Activated CD4-positive, alpha-beta memory T cell treated with anti-CD3 and anti-CD28 coated beads for 36 hours (primary cell): ENCODE measurements at regions of chr11 and their contacts with region 1.

Region 1: DNA sequence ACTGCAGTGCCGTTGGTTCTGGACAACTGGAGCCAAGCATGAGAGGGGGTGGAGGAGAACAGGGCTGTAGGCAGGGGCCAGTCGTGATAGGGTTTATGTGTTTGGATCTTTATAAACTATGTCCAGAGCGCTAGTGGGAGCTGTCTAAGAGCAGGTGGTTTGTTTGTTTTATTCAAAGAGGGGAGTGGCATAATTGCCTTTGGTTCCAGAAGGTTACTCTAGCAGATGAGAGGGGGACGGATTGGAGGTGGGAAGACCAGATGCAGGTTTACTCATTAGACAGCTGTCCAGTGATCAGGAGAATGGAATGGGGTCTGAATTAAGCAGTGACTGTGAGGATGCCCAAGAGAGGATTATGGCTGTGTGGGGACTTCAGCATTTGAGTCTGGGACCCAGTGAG is 109.3 kb upstream of the TBCEL start:
- DNase-seq: no peak
- H3K4me3 Mint-ChIP-seq: no peak overlapping the region
- H3K27ac Mint-ChIP-seq: no peak overlapping the region
- H3K4me1 Mint-ChIP-seq: no peaks in the 10 kb centered on the region
- H3K27me3 Mint-ChIP-seq: peaks cover 7% of the 10 kb centered on the region

Region 2: GRCh38 chr11:120778685-120779490 is 135.7 kb before region 1 on chr11:
- CTCF ChIA-PET with region 1: no interaction called
- POLR2A ChIA-PET with region 1: no interaction called
- intact Hi-C with region 1: no loop called
- DNase-seq: no peak
- H3K4me3 Mint-ChIP-seq: no peak overlapping the region
- H3K27ac Mint-ChIP-seq: no peak overlapping the region
- H3K4me1 Mint-ChIP-seq: no peaks in the 10 kb centered on the region
- H3K27me3 Mint-ChIP-seq: peaks cover 5% of the 10 kb centered on the region

Region 3: DNA sequence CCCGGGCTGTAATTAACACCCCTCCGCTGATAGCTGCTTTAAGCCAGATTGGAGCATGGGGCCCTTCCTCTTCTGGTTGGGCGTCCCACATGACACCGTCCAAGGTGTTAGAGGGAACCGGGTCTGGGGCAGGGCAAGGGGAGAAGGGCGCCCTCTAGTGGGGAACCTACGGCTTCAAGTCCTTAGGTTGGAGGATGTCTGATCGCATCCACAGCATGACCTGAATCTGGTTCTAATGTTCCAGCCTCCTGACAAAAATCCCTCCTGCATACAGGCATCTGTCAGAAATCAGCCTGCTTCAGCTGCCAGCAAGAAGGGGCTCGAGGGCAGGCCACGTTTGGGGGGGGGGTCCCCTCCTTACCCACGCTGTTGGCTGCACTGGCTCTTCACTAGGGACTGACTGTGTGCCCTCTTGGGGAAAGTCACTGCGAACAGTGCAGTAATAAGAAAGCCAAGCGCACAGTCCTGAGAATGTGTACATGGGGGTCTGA is 15.1 kb after region 1 on chr11:
- CTCF ChIA-PET with region 1: interaction called, 10 read pairs
- POLR2A ChIA-PET with region 1: no interaction called
- intact Hi-C with region 1: no loop called
- DNase-seq: peak; percentile 57
- H3K4me3 Mint-ChIP-seq: no peak overlapping the region
- H3K27ac Mint-ChIP-seq: no peak overlapping the region
- H3K4me1 Mint-ChIP-seq: no peaks in the 10 kb centered on the region
- H3K27me3 Mint-ChIP-seq: no peaks in the 10 kb centered on the region

Region 4: DNA sequence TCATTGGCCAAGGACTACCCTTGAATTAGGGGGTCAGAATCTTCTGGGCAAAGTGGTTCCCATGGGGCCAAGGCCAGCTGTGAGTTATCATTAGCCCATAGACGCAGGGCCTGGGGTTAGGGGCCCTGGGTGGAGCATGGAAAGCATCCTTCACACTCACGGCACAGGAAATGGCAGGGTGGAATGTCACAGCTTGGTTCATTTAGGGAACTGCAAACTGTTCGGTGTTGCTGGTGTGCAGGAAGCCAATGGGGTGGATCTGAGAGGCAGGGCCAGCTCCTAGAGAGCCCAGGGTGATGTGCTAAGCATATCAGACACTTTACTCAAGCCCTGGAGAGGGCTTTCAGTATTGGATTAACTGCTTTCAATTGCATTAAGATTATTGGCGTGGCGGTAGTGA is 229.3 kb after region 1 on chr11:
- CTCF ChIA-PET with region 1: no interaction called
- POLR2A ChIA-PET with region 1: no interaction called
- intact Hi-C with region 1: no loop called
- DNase-seq: no peak
- H3K4me3 Mint-ChIP-seq: no peak overlapping the region
- H3K27ac Mint-ChIP-seq: no peak overlapping the region
- H3K4me1 Mint-ChIP-seq: no peaks in the 10 kb centered on the region
- H3K27me3 Mint-ChIP-seq: no peaks in the 10 kb centered on the region